PC-9 (cell line): ENCODE measurements at regions of chr12 and their contacts with region 1.

Region 1: DNA sequence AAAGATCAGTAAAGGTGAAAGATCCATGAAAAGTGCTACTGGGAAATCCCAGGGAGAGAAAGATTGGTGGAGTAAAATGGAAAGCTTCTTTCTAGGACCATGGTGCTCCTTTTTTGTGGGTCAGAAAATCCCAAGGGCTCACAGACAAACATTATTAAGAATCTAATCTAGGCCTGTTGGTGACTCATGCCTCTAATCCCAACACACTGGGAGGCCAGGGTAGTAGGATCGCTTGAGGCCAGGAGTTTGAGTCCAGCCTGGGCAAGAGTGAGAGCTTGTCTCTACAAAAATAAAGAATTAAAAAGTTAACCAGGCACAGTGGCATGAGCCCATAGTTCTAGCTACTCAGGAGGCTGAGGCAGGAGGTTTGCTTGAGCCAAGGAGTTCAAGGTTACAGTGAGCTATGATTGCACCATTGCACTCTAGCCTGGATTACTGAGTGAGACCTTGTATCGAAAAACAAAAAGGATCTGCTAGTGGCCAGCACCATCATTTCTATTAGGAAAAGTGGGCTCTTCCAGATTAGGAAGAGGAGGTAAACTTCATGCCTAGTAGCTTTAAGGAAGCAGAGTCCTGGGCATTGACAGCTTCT is 43.0 kb downstream of the TXNRD1 start:
- DNase-seq: no peak
- H3K4me3 ChIP-seq: no peak overlapping the region
- H3K27ac ChIP-seq: peak overlapping the region; percentile 38; the same call in 1 of the 2 replicates
- H3K4me1 ChIP-seq: peaks cover 30% of the 10 kb centered on the region
- H3K27me3 ChIP-seq: no peaks in the 10 kb centered on the region
- CTCF ChIP-seq: no peak

Region 2: GRCh38 chr12:104226672-104227071 is 31.9 kb before region 1 on chr12:
- CTCF ChIA-PET with region 1: interaction called, 11 read pairs
- POLR2A ChIA-PET with region 1: interaction called, 3 read pairs
- intact Hi-C with region 1: loop called (anchors 5 kb)
- DNase-seq: no peak
- H3K4me3 ChIP-seq: no peak overlapping the region
- H3K27ac ChIP-seq: no peak overlapping the region
- H3K4me1 ChIP-seq: peaks cover 25% of the 10 kb centered on the region
- H3K27me3 ChIP-seq: no peaks in the 10 kb centered on the region
- CTCF ChIP-seq: no peak